Esophagus muscularis mucosa (tissue), 4 donors: ENCODE measurements at regions of chr17 and their contacts with region 1.

Region 1: DNA sequence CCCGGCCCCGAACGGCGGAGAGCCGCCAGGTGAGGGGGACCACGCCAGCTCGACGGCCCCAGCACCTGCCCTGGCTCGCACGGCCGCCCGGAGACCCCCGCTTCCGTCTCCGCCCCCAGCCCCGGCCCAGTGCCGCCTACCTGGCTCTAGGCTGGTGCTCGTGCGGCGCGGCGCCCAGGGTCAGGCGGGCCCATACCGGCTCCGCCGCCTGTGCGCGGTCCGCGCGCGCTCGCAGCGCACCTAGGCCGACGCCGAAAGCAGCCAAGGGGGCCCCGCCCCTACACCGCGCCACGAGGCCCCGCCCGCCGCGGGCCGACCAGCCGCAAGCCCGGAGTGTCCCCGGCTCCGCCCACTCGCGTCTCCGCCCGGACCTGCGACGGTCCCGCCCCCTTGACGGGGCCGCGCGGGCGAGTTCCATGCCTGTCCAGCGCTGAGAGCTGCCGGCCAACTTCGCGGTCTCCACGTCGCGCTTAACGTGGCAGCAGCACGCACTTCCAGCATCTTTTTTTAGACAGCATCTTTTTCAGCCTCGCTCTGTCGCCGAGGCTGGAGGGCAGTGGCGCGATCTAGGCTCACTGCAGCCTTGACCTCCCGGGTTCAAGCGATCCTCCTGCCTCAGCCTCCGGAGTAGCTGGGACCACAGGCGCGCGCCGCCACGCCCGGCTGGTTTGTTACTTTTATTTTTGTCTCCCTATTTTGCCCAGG is at the start of gene SLC25A39:
- DNase-seq: peak; percentile 97
- H3K4me3 ChIP-seq: peak within 1 kb of the TSS; percentile 80 to 100 (median 98)
- H3K27ac ChIP-seq: peak within 1 kb of the TSS; percentile 90 to 96 (median 94)
- H3K4me1 ChIP-seq: peaks cover 27 to 42% (median 41%) of the 10 kb centered on the region in 4 donors
- H3K27me3 ChIP-seq: no peaks in the 10 kb centered on the region
- CTCF ChIP-seq: peak in 1 of 3 experiments; percentile 34
- EP300 ChIP-seq: no peak
- POLR2A ChIP-seq: no peak
- total RNA-seq, gene SLC25A39: 41.1 to 69.0 (median 56.8) TPM

Region 2: DNA sequence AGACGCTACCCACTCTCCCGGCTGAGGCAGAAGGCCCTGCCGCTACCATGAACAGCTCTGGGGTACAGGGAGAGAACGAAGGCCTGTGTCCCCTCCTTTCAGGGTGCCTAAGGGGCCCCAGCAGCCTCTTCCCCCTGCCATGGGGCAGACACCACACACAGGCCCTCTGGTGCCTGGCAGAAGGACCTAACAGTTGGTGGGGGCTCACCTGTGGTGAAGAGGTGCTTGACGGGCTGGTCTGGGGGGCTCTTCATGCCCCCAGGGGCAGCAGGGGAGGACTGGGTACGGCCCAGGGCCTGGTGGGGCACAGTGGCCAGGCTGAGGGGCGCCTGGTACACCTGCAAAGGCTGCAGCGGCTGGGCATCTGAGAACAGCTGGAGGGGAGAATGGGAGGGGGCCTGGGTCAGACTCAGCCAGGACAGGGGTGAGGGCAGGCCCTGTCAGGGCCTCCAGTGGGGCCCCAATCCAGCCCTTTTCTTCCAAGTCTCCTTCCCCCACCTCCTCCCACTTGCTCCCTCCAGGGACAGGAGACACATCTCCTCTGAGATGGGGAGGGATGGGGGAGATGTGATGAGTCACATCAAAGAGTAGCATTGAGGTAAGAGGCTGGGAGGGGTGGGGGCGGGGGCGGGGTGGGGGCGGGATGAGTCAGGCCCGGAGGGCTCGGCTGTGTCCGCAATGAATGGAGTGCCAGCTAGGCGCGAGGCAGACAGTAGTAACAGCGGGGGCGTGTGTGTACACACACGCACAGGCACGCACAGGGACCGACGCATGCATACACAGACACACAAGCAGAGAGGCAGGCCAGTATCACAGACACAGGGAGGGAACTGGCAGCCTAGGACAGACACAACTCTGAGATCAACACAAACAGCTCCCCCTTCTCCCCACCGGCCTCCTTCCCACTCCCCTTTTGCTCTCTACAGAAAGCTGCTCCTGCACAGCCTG is 238.1 kb before region 1 on chr17:
- intact Hi-C with region 1: no loop called
- DNase-seq: no peak
- H3K4me3 ChIP-seq: no peak overlapping the region
- H3K27ac ChIP-seq: peak overlapping the region; percentile 60 to 72 (median 69)
- H3K4me1 ChIP-seq: peaks cover 5 to 24% (median 18%) of the 10 kb centered on the region in 4 donors
- H3K27me3 ChIP-seq: no peaks in the 10 kb centered on the region
- CTCF ChIP-seq: no peak
- EP300 ChIP-seq: no peak
- POLR2A ChIP-seq: no peak

Region 3: DNA sequence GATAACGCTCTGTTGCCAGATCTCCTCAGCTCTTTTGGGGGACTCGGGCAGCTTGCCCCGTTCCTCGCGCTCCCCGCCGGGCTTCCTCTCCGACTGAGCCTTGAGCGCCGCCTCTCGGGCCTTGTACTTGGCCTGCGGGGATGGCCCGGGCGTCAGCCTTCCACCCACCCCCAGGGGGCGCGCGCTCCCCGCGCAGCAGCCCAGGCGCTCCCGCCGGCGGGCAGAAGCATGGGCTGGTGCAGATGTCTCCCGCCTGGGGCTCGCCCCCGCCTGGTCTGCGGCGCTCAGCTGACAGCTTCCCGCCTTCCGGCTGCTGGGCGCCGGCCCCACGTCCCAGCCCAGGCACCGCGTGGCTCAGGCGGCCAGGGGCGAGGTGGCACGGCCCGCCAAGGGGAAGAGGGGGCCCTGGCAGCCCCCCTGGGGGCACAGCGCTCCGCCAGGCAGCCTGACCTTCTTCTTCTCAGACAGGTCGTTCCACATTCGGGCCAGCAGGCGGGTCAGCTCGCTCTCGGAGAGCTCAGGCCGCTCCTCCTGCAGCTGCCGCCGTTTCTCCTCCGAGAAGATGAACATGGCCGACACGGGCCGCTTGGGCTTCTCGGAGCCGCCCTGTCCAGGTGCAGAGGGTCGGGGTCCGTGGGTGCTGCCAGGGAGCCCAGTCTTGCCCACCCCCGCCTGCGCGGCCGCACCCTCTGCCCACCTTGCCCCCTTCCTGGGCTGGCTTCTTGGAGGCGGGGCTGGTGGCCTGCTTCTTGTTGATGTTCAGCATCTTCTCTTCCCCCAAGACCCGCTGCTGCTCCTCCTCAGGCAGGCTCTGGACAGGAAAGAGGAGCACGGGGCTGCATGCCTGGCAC is 114.2 kb before region 1 on chr17:
- intact Hi-C with region 1: loop called (anchors 2 kb)
- DNase-seq: no peak
- H3K4me3 ChIP-seq: peak overlapping the region; percentile 13 to 39 (median 31)
- H3K27ac ChIP-seq: peak overlapping the region; percentile 60 to 82 (median 72)
- H3K4me1 ChIP-seq: peaks cover 14 to 40% (median 25%) of the 10 kb centered on the region in 4 donors
- H3K27me3 ChIP-seq: peaks cover 0 to 8% (median 0%) of the 10 kb centered on the region in 4 donors
- CTCF ChIP-seq: peak; percentile 99 to 100 (median 100)
- EP300 ChIP-seq: no peak
- POLR2A ChIP-seq: no peak

Region 4: DNA sequence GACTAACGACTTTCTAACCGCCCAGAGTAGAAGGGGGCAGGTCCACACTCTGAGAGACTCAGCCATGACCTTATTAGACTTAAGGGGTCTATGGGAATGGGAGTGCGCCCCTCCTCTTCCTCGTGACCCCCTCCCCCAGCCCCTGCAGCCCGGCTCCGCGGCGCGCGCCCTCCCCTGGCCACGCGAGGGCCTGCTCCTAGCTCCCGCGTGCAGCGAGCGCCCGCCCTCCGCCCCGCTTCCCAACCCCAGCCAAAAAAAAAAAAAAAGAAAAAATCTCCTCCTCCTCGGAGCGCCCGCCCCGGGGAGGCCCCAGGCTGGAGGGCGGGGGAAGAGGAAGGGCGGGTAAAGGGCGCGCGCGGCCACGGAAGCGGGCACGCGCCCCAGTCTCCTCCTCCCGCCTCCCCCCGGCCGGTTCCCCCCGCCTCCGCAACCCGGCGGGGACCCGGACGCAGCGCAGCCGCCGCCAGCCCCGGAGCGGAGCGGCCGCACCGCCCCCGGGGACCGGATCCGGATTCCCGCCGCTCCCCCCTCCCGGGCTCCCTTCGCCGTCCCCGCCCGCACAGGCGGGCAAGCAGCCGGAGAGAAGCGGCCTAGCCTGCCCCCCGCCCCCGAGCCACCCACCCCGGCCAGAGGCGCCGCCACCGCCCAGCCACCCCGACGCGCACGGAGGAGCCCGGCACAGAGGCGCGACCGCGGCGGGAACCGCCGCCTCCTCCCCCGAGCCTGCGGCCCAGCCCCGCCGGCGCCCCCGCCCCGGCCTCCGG is 106.2 kb before region 1 on chr17:
- intact Hi-C with region 1: loop called (anchors 2 kb)
- DNase-seq: no peak
- H3K4me3 ChIP-seq: peak overlapping the region; percentile 92 to 98 (median 96)
- H3K27ac ChIP-seq: peak overlapping the region; percentile 100
- H3K4me1 ChIP-seq: peaks cover 33 to 53% (median 42%) of the 10 kb centered on the region in 4 donors
- H3K27me3 ChIP-seq: no peaks in the 10 kb centered on the region
- CTCF ChIP-seq: peak; percentile 54 to 77 (median 68)
- EP300 ChIP-seq: no peak
- POLR2A ChIP-seq: peak; percentile 69

Region 5: GRCh38 chr17:44293509-44294226 is 31.1 kb before region 1 on chr17:
- intact Hi-C with region 1: no loop called
- DNase-seq: no peak
- H3K4me3 ChIP-seq: no peak overlapping the region
- H3K27ac ChIP-seq: no peak overlapping the region
- H3K4me1 ChIP-seq: no peaks in the 10 kb centered on the region
- H3K27me3 ChIP-seq: peaks cover 0 to 10% (median 0%) of the 10 kb centered on the region in 4 donors
- CTCF ChIP-seq: no peak
- EP300 ChIP-seq: no peak
- POLR2A ChIP-seq: no peak

Region 6: GRCh38 chr17:44376124-44376523 is 51.4 kb after region 1 on chr17:
- intact Hi-C with region 1: no loop called
- DNase-seq: no peak
- H3K4me3 ChIP-seq: no peak overlapping the region
- H3K27ac ChIP-seq: no peak overlapping the region
- H3K4me1 ChIP-seq: peaks cover 6 to 28% (median 23%) of the 10 kb centered on the region in 4 donors
- H3K27me3 ChIP-seq: peaks cover 0 to 22% (median 4%) of the 10 kb centered on the region in 4 donors
- CTCF ChIP-seq: peak in 1 of 3 experiments; percentile 28
- EP300 ChIP-seq: no peak
- POLR2A ChIP-seq: no peak

Region 7: GRCh38 chr17:44389723-44390202 is 65.0 kb after region 1 on chr17:
- intact Hi-C with region 1: no loop called
- DNase-seq: no peak
- H3K4me3 ChIP-seq: no peak overlapping the region
- H3K27ac ChIP-seq: no peak overlapping the region
- H3K4me1 ChIP-seq: peaks cover 11 to 15% (median 14%) of the 10 kb centered on the region in 4 donors
- H3K27me3 ChIP-seq: peaks cover 0 to 13% (median 0%) of the 10 kb centered on the region in 4 donors
- CTCF ChIP-seq: no peak
- EP300 ChIP-seq: no peak
- POLR2A ChIP-seq: no peak